ENCODE measurements at regions of chr3 and their contacts with region 1.

Region 1: GRCh38 chr3:22117751-22118346 is 366.8 kb upstream of the ZNF385D start:
- H3K4me3 Mint-ChIP-seq: no peak overlapping the region
- H3K27ac Mint-ChIP-seq: no peak overlapping the region
- H3K4me1 Mint-ChIP-seq: no peaks in the 10 kb centered on the region
- H3K27me3 Mint-ChIP-seq: no peaks in the 10 kb centered on the region

Region 2: DNA sequence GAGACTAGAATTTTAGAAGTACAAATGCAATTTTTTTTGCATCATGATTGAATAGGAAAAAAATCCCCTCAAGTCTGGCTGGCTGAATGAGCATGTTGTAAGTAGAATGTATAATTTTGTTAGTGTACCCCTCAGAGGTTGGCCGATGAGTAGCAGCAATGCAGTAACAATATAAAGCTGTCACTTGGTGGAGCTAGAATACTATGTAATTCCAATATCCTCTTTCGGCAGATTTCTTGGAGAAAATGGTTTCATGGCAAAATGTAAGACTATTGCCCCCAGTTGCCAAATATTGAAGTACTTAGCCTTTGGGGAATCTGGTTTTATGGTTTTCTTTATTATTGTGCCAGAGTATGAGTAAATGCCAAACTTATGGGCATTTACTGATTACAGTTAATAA is 1892.1 kb before region 1 on chr3:
- intact Hi-C with region 1: loop called (anchors 5 kb)
- H3K4me3 Mint-ChIP-seq: no peak overlapping the region
- H3K27ac Mint-ChIP-seq: no peak overlapping the region
- H3K4me1 Mint-ChIP-seq: no peaks in the 10 kb centered on the region
- H3K27me3 Mint-ChIP-seq: no peaks in the 10 kb centered on the region

Region 3: DNA sequence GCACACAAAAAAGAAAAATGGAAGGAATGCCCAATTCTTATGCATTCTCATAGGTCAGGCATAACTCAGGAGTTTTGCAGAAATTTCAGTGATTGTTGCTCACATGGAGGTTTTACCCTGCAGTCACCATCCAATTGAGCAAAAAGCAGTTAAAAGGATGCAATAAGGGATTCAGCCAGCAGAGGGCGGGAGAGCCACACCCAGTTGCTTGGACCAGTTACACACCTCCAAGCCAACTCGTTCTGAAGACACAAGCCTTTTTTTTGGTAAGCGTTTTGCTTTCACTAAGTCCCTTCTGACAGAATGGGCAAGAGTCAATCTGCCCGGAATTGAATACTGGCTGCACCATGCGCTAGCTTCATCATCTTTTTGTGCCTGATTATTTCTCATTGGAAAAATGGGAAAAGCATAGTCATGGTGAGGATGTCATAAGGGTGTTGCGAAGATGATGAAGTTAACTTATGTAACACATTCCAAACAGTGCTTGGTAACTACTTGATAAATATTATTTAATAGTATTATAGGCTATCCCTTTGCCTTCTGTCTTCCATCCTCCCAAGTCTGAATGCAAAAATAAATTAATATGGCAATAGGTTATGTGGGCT is 1777.4 kb before region 1 on chr3:
- intact Hi-C with region 1: loop called (anchors 1 kb)
- H3K4me3 Mint-ChIP-seq: no peak overlapping the region
- H3K27ac Mint-ChIP-seq: no peak overlapping the region
- H3K4me1 Mint-ChIP-seq: no peaks in the 10 kb centered on the region
- H3K27me3 Mint-ChIP-seq: no peaks in the 10 kb centered on the region

Region 4: GRCh38 chr3:20511863-20512505 is 1605.9 kb before region 1 on chr3:
- intact Hi-C with region 1: loop called (anchors 5 kb)
- H3K4me3 Mint-ChIP-seq: no peak overlapping the region
- H3K27ac Mint-ChIP-seq: no peak overlapping the region
- H3K4me1 Mint-ChIP-seq: no peaks in the 10 kb centered on the region
- H3K27me3 Mint-ChIP-seq: no peaks in the 10 kb centered on the region

Region 5: GRCh38 chr3:22045882-22046281 is 72.0 kb before region 1 on chr3:
- intact Hi-C with region 1: no loop called
- H3K4me3 Mint-ChIP-seq: no peak overlapping the region
- H3K27ac Mint-ChIP-seq: no peak overlapping the region
- H3K4me1 Mint-ChIP-seq: no peaks in the 10 kb centered on the region
- H3K27me3 Mint-ChIP-seq: no peaks in the 10 kb centered on the region

Region 6: DNA sequence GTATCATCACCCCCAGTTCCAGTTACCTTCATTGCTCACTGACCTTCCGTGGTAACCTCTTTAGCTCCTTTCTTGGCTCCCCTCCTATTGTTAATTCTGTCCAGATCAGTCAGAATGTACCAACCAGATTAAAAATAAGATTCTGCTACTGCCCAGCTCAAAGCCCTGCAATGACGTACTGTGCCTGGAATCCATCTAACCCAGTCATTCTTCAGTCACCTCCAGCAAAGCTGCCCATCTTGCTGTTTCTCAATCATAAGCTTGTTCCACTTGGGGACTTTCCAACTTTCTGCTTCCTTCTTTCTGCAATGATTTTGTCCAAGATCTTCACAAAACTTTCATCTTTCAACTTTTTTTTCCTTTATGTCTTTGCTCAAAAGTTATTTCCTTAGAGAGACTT is 145.2 kb after region 1 on chr3:
- intact Hi-C with region 1: no loop called
- H3K4me3 Mint-ChIP-seq: no peak overlapping the region
- H3K27ac Mint-ChIP-seq: no peak overlapping the region
- H3K4me1 Mint-ChIP-seq: no peaks in the 10 kb centered on the region
- H3K27me3 Mint-ChIP-seq: no peaks in the 10 kb centered on the region